ENCODE measurements at regions of chr4 and their contacts with region 1.

Region 1: GRCh38 chr4:6909073-6909965 is at the start of gene TBC1D14:
- DNase-seq: peak; percentile 82
- H3K4me3 Mint-ChIP-seq: peak within 1 kb of the TSS; percentile 95
- H3K27ac Mint-ChIP-seq: peak within 1 kb of the TSS; percentile 94
- H3K4me1 Mint-ChIP-seq: peaks cover 66% of the 10 kb centered on the region
- H3K27me3 Mint-ChIP-seq: no peaks in the 10 kb centered on the region
- total RNA-seq, gene TBC1D14: 58.1 and 59.7 TPM in 2 replicates

Region 2: GRCh38 chr4:6180841-6181631 is 728.3 kb before region 1 on chr4:
- intact Hi-C with region 1: loop called (anchors 10 kb)
- DNase-seq: peak; percentile 74
- H3K4me3 Mint-ChIP-seq: peak overlapping the region; percentile 72
- H3K27ac Mint-ChIP-seq: peak overlapping the region; percentile 95
- H3K4me1 Mint-ChIP-seq: peaks cover 86% of the 10 kb centered on the region
- H3K27me3 Mint-ChIP-seq: no peaks in the 10 kb centered on the region

Region 3: GRCh38 chr4:6783053-6783981 is 126.0 kb before region 1 on chr4:
- intact Hi-C with region 1: loop called (anchors 1 kb)
- DNase-seq: peak; percentile 86
- H3K4me3 Mint-ChIP-seq: peak overlapping the region; percentile 85
- H3K27ac Mint-ChIP-seq: peak overlapping the region; percentile 86
- H3K4me1 Mint-ChIP-seq: peaks cover 57% of the 10 kb centered on the region
- H3K27me3 Mint-ChIP-seq: no peaks in the 10 kb centered on the region

Region 4: GRCh38 chr4:6898763-6899162 is 10.6 kb before region 1 on chr4:
- intact Hi-C with region 1: loop called (anchors 1 kb)
- DNase-seq: no peak
- H3K4me3 Mint-ChIP-seq: peak overlapping the region; percentile 72
- H3K27ac Mint-ChIP-seq: peak overlapping the region; percentile 97
- H3K4me1 Mint-ChIP-seq: peaks cover 49% of the 10 kb centered on the region
- H3K27me3 Mint-ChIP-seq: no peaks in the 10 kb centered on the region

Region 5: DNA sequence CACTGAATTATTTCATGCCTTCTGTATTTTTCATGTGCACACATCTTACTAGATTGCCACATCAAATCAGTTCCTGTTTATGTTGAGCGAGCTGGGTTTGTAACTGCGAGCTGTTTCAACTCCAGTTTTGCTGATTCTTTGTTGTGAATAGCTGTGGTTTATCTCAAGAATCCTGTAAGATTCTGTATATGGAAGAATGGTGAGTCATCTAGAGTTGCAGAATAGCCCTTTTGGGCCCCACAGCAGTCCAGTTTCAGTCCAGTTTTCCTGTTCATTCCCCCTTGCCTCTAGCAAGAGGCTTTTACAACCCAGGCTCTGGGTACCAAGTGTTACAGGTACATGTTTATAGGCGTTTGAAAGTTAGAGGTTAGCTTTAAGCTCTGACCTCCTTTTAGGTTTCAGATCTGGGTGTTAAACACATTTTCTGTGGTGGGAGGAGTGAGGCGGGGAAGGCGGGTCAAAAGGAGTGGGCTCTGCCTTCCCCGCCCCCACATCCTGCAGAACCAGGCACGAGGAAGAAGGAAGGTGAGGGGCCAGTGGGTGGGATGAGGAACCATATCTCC is 33.0 kb after region 1 on chr4:
- intact Hi-C with region 1: loop called (anchors 1 kb)
- DNase-seq: peak; percentile 39
- H3K4me3 Mint-ChIP-seq: peak overlapping the region; percentile 61
- H3K27ac Mint-ChIP-seq: peak overlapping the region; percentile 85
- H3K4me1 Mint-ChIP-seq: peaks cover 53% of the 10 kb centered on the region
- H3K27me3 Mint-ChIP-seq: no peaks in the 10 kb centered on the region

Region 6: GRCh38 chr4:7124689-7125442 is 215.5 kb after region 1 on chr4:
- intact Hi-C with region 1: no loop called
- DNase-seq: no peak
- H3K4me3 Mint-ChIP-seq: no peak overlapping the region
- H3K27ac Mint-ChIP-seq: no peak overlapping the region
- H3K4me1 Mint-ChIP-seq: no peaks in the 10 kb centered on the region
- H3K27me3 Mint-ChIP-seq: no peaks in the 10 kb centered on the region

Measured in activated T-helper 1 cell treated with anti-CD3 and anti-CD28 coated beads, Interleukin-12 subunit alpha, Interleukin-12 subunit beta, Interleukin-2, Interleukin-4 antibody, amounts not matched to agents 30 ng/mL and 10 ng/mL and 1 ng/mL, durations not matched to agents 14 hours and 24 hours and 36 hours (primary cell).